ENCODE measurements at regions of chr18 and their contacts with region 1.

Region 1: DNA sequence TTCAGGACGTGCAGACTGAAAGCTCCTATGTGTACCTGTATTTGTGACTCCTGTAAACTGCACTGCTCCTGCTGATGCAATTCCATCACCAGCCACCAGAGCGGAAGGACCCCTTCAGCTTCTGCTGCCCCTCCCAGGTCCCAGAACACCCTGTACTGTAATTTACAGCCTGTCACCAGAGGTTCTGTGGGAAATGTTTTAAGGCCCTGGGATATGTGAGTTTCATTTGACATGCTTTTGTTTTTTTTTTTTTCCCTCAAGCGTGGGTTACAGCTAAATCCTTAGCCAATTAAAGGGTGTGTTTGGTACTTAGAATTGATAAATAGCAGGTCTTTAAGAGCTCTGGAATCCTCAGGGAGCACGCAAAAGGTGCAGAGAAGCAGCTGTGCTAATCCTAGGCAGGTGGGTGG is 79.4 kb downstream of the KCTD1 start:
- DNase-seq: no peak
- ATAC-seq: peak in 1 of 4 donors; percentile 39
- H3K4me3 ChIP-seq: no peak overlapping the region
- H3K27ac ChIP-seq: no peak overlapping the region
- H3K4me1 ChIP-seq: peaks cover 0 to 12% (median 0%) of the 10 kb centered on the region in 12 donors
- H3K27me3 ChIP-seq: no peaks in the 10 kb centered on the region
- CTCF ChIP-seq: peak in 10 of 12 donors; percentile 14 to 57 (median 34)
- POLR2A ChIP-seq: no peak

Region 2: GRCh38 chr18:26495287-26495686 is 26.4 kb after region 1 on chr18:
- intact Hi-C with region 1: no loop called
- DNase-seq: no peak
- ATAC-seq: no peak
- H3K4me3 ChIP-seq: no peak overlapping the region
- H3K27ac ChIP-seq: no peak overlapping the region
- H3K4me1 ChIP-seq: no peaks in the 10 kb centered on the region
- H3K27me3 ChIP-seq: no peaks in the 10 kb centered on the region
- CTCF ChIP-seq: no peak
- POLR2A ChIP-seq: no peak

Region 3: GRCh38 chr18:26511339-26512071 is 42.6 kb after region 1 on chr18:
- intact Hi-C with region 1: loop called in 2 of 10 experiments (anchors 5 to 10 kb)
- DNase-seq: no peak
- ATAC-seq: peak in 3 of 4 donors; percentile 16 to 30 (median 27)
- H3K4me3 ChIP-seq: peak overlapping the region in 1 of 12 donors; percentile 9
- H3K27ac ChIP-seq: peak overlapping the region in 5 of 12 donors; percentile 11 to 51 (median 44)
- H3K4me1 ChIP-seq: peaks cover 1 to 45% (median 21%) of the 10 kb centered on the region in 12 donors
- H3K27me3 ChIP-seq: no peaks in the 10 kb centered on the region
- CTCF ChIP-seq: no peak
- POLR2A ChIP-seq: no peak

Region 4: GRCh38 chr18:26648509-26649192 is 179.7 kb after region 1 on chr18:
- intact Hi-C with region 1: loop called in 1 of 10 experiments (anchors 5 kb)
- DNase-seq: no peak
- ATAC-seq: no peak
- H3K4me3 ChIP-seq: no peak overlapping the region
- H3K27ac ChIP-seq: no peak overlapping the region
- H3K4me1 ChIP-seq: peaks cover 0 to 7% (median 0%) of the 10 kb centered on the region in 12 donors
- H3K27me3 ChIP-seq: peaks cover 0 to 14% (median 0%) of the 10 kb centered on the region in 9 donors
- CTCF ChIP-seq: no peak
- POLR2A ChIP-seq: no peak

Measured in heart left ventricle (tissue), 16 donors.